ENCODE measurements at regions of chr7 and their contacts with region 1.

Region 1: DNA sequence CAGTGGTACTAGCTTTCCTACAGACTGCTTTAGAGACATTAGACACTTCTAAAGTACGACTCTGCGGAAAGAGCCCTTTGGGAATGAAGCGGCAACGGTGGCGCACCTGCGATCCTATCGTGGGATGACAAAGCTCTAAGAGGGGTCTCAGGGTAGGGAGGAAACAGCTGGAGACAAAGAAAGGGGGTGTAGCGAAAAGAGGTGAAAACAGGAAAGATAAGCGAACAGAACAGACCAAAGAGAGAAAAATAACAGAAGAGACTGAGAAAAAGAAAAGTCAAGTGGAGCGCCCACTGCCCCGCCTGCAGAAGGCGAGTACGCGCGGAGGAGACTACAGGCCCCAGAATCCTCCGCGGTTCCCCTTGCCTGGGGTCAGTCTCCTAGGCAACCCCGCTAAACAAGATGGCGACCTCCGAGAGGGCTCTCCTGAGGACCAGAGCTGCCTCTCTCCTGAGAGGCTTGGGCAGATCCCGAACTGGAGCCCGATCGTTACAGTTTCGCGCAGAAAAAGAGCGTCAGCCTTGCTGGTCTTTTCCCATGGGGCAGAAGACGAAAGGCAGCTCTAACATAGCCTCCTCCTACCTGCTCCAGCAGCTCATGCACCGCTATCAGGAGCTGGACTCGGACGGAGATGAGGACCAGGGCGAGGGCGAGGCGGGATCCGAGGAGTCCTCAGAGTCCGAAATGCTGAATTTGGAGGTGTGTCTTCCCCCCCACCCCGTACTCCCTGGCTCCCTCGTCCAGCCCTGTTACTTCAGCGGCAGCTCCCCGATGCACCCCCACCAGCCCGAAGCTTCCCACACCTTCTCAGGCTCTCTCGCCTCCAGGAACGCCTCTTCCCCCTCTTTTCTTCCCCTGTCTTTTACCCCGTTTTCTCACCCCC is at the start of gene LRGUK:
- DNase-seq: peak; percentile 72
- H3K4me3 Mint-ChIP-seq: peak within 1 kb of the TSS; percentile 88
- H3K27ac Mint-ChIP-seq: peak within 1 kb of the TSS; percentile 42
- H3K4me1 Mint-ChIP-seq: peaks cover 14% of the 10 kb centered on the region
- H3K27me3 Mint-ChIP-seq: peaks cover 19% of the 10 kb centered on the region
- total RNA-seq, gene LRGUK: 0.05 TPM in 1 of 2 replicates, not detected in the other

Region 2: DNA sequence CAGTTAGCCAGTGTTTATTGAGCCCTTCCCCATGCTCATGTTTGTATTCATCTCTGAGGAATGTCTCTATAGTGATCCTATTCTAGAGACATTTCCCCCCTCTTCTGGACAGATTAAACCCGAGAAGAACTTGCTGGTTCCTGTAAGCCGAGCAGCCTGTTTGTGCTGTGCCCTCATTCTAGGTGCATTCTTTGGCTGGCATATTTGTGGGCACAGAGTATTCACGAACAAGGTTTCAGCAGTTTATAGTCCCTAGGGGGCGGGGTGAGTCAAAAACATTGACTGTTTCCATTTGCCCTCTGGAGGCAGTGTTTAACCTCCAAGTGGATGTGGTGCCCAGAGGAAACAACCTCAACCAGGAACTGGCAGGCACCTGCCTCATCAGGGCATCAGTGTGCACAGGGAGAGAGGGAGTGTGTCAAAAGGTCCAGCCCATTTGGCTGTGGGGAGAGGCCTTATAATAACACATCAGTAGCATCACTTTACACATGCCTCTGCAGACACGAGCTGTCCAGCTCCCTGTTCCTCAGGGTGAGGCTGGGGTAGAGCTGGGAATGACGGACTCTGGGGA is 273.4 kb before region 1 on chr7:
- intact Hi-C with region 1: loop called (anchors 10 kb)
- DNase-seq: no peak
- H3K4me3 Mint-ChIP-seq: no peak overlapping the region
- H3K27ac Mint-ChIP-seq: no peak overlapping the region
- H3K4me1 Mint-ChIP-seq: no peaks in the 10 kb centered on the region
- H3K27me3 Mint-ChIP-seq: no peaks in the 10 kb centered on the region

Region 3: DNA sequence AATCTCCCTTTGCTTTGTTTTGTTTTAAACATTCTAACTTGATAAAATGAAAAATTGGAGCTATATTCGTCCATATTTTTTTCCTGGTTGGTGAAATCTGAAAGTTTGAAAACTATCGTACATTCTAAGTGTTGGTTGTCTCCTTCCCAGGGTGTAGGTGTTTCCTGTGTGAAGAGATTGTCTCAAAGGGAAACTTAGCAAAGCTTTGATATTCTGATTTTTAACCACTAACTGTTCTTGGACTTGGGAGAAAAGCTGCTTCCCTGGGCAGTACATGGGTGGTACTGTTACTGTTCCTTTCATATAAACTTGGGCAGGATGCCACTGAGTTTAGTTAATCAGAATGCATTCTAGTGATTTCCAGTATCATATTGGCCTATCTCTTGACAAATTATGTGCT is 253.6 kb before region 1 on chr7:
- intact Hi-C with region 1: no loop called
- DNase-seq: no peak
- H3K4me3 Mint-ChIP-seq: no peak overlapping the region
- H3K27ac Mint-ChIP-seq: no peak overlapping the region
- H3K4me1 Mint-ChIP-seq: peaks cover 17% of the 10 kb centered on the region
- H3K27me3 Mint-ChIP-seq: no peaks in the 10 kb centered on the region

Region 4: GRCh38 chr7:134104166-134104565 is 23.0 kb before region 1 on chr7:
- intact Hi-C with region 1: loop called (anchors 1 kb)
- DNase-seq: no peak
- H3K4me3 Mint-ChIP-seq: no peak overlapping the region
- H3K27ac Mint-ChIP-seq: no peak overlapping the region
- H3K4me1 Mint-ChIP-seq: no peaks in the 10 kb centered on the region
- H3K27me3 Mint-ChIP-seq: no peaks in the 10 kb centered on the region

Region 5: DNA sequence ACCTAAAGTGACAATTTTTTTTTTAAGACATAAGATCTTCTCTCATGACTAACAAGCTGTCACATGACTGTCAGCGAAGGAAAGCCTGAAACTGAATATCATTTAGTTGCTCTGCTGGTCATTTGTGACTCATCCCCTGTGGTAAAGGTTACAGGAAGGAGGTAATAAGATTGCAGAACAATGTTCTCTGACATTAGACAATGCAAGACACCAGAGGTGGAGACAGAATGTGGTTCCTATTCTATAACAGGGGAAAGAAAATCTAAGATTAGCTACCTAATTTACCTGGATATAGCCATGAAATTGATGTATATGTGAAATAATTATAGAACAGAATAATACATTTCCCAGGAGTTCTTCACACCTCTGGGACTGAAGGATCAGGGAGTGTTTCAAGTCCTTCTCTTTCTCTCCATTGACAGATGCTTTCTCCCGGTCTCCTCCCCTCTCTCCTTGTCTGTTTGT is 47.6 kb after region 1 on chr7:
- intact Hi-C with region 1: no loop called
- DNase-seq: no peak
- H3K4me3 Mint-ChIP-seq: no peak overlapping the region
- H3K27ac Mint-ChIP-seq: no peak overlapping the region
- H3K4me1 Mint-ChIP-seq: peaks cover 13% of the 10 kb centered on the region
- H3K27me3 Mint-ChIP-seq: peaks cover 3% of the 10 kb centered on the region

Region 6: DNA sequence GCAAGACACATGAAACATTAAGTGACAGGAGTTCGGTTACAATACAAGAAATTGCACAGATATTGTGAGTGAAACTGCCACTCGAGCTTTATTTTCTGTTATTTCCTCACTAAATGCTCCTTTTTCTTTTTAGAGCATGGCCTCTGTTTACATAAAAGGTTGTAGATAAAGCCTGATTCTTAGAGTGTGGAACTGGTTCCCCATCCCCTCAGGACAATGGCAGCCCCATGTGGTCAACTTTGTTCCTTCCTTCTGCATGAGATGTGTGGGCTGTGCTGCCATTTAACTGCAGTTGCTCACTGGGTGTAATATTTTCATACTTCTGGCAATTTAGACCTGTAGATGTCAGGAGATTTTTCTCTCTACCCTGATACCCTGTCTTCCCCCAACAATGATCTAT is 70.1 kb after region 1 on chr7:
- intact Hi-C with region 1: no loop called
- DNase-seq: no peak
- H3K4me3 Mint-ChIP-seq: no peak overlapping the region
- H3K27ac Mint-ChIP-seq: no peak overlapping the region
- H3K4me1 Mint-ChIP-seq: no peaks in the 10 kb centered on the region
- H3K27me3 Mint-ChIP-seq: no peaks in the 10 kb centered on the region